Ascending aorta (tissue), 2 donors: ENCODE measurements at regions of chr1 and their contacts with region 1.

Region 1: DNA sequence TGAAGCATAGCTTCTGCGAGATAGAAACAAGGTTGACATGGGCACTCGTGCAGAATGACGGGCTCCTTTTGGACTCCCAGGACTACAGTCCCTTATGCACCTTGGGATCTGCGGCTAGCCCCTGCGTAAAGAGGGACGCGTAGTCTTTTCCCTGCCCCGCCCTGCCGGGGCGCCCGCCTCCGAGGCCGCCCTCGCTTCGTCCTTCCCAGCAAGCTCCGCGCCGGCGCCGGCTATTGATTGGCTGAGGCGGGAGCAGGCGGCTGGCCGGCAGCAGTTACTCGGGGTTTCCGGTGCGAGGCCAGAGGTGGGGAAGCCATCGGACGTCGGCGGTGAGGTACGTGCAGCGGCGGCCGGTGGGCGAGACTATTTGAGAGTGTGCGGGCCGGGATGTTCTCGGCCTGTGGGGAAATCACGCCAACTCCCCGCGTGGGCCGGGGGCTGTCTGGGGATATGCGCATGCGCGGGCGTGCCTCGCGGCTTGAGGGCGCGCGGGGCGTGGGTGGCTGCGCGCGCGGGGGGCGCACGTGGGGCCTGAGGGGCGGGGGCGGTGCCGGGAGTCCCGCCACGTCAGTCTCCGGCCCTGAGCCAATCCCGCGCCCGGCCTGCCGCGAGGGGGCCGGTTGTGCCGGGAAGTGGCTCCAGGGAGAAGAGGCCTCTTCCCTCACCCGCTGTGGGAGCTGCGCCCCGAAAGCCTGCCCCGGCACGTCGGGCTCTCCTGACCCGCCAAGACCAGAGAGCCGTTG is at the start of gene TXLNA:
- DNase-seq: peak; percentile 87 to 98
- H3K4me3 ChIP-seq: peak within 1 kb of the TSS; percentile 73 to 79
- H3K27ac ChIP-seq: peak within 1 kb of the TSS; percentile 94
- H3K4me1 ChIP-seq: peaks cover 19 to 29% of the 10 kb centered on the region in 2 donors
- H3K27me3 ChIP-seq: no peaks in the 10 kb centered on the region
- CTCF ChIP-seq: peak in 1 of 3 experiments; percentile 36
- total RNA-seq, gene TXLNA: 83.8 TPM

Region 2: DNA sequence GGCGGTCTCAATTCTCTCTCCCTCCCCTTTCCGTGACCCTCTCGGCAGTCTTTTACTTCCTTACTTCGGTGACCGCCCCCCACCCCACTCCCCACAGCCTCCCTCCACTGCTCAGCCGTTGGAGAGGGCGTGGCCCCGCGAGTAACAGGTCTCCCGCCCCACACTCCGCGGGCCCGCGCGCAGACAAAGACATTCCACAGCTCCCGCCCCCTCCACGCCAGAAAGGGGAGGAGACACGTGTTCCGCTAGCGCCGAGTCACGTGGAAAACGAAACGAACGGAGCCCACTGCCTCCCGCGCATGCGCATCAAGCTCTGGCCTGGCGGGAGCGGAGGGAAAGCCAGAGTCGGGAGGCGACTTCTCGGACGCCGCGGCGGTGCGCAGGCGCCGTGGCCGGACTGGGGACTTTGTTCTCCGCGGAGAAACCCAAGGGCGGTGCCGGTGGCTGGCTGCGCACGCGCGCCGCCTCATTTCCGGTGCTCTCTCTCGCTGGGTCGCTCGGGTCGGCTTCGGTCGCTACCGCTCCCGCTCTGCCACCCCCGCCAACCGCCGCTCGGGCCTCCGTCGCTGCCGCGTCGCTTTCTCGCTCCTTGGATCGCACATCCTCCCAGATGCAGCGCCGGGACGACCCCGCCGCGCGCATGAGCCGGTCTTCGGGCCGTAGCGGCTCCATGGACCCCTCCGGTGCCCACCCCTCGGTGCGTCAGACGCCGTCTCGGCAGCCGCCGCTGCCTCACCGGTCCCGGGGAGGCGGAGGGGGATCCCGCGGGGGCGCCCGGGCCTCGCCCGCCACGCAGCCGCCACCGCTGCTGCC is 166.0 kb before region 1 on chr1 and contains the start of gene KHDRBS1:
- intact Hi-C with region 1: loop called (anchors 10 kb)
- DNase-seq: peak; percentile 95 to 100
- H3K4me3 ChIP-seq: peak within 1 kb of the TSS; percentile 96 to 99
- H3K27ac ChIP-seq: peak within 1 kb of the TSS; percentile 98 to 100
- H3K4me1 ChIP-seq: peaks cover 9 to 23% of the 10 kb centered on the region in 2 donors
- H3K27me3 ChIP-seq: no peaks in the 10 kb centered on the region
- CTCF ChIP-seq: no peak
- total RNA-seq, gene KHDRBS1: 120 TPM

Region 3: DNA sequence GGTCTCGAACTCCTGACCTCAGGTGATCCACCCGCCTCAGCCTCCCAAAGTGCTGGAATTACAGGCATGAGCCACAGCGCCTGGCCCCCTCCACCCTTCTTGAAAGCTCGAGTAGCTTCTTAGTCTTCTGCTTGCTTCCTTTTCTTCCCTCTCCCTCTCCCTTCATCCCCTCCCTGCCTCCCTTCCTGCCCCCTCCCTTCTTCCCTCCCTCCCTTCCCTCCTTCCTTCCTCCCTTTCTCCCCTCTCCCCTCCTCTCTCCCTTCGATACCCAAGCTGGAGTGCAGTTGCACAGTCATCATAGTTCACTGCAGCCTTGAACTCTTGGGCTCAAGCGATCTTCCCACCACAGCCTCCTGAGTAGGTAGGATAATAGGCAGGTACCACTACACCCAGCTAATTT is 154.1 kb before region 1 on chr1:
- intact Hi-C with region 1: no loop called
- DNase-seq: no peak
- H3K4me3 ChIP-seq: no peak overlapping the region
- H3K27ac ChIP-seq: peak overlapping the region in 1 of 2 donors; percentile 25
- H3K4me1 ChIP-seq: peaks cover 3 to 21% of the 10 kb centered on the region in 2 donors
- H3K27me3 ChIP-seq: no peaks in the 10 kb centered on the region
- CTCF ChIP-seq: no peak

Region 4: DNA sequence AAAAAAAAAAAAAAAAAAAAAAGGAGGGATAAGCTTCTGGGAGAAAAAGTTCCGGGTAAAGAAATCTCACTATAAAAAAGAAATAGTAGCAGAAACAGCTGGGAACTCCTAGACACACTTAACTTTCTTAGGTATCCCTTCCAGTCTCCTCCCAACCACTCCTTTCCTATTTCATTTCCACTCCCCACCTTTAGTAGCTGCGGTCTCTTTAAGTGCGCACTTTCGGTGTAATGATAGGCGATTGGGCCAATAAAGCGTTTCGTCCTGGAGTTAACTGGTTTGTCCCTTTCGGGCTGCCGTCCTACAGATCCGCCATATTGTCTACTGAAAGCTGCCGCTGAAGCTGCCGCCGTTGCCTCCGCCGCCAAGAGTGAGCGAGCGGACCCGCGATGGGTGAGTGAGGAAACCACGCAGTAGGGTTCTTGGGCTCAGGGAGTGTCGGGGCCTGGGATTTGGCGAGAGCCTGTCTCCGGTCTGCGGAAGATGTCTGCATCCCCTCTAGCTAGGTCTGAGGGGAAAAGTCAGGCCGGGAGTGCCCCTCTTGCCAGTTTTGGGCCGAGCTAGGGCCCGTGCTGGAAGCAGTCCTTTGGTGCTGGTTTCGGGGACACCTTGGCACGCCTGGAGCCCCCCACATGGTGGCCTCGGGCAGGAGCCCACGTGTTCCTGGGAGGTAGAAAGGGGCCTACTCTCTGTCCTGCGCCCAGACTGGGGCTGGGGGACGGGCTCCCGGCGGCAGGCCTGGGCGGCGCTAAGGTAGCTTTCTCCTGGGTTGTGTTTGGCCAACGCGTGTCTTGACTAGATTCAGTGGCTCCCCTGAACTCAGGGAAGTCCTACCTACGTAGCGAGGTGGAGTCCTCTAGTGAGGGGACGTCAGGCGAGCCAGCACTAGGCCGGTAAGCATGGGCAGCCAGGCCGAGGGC is 71.6 kb before region 1 on chr1 and contains the start of gene KPNA6:
- intact Hi-C with region 1: loop called (anchors 1 kb)
- DNase-seq: peak; percentile 55 to 95
- H3K4me3 ChIP-seq: peak within 1 kb of the TSS; percentile 80 to 92
- H3K27ac ChIP-seq: peak within 1 kb of the TSS; percentile 87 to 92
- H3K4me1 ChIP-seq: peaks cover 4 to 38% of the 10 kb centered on the region in 2 donors
- H3K27me3 ChIP-seq: no peaks in the 10 kb centered on the region
- CTCF ChIP-seq: peak in 1 of 3 experiments; percentile 5
- total RNA-seq, gene KPNA6: 26.1 TPM

Region 5: GRCh38 chr1:32138943-32139342 is 40.7 kb before region 1 on chr1:
- intact Hi-C with region 1: no loop called
- DNase-seq: no peak
- H3K4me3 ChIP-seq: no peak overlapping the region
- H3K27ac ChIP-seq: no peak overlapping the region
- H3K4me1 ChIP-seq: peaks cover 0 to 6% of the 10 kb centered on the region in 2 donors
- H3K27me3 ChIP-seq: no peaks in the 10 kb centered on the region
- CTCF ChIP-seq: no peak

Region 6: DNA sequence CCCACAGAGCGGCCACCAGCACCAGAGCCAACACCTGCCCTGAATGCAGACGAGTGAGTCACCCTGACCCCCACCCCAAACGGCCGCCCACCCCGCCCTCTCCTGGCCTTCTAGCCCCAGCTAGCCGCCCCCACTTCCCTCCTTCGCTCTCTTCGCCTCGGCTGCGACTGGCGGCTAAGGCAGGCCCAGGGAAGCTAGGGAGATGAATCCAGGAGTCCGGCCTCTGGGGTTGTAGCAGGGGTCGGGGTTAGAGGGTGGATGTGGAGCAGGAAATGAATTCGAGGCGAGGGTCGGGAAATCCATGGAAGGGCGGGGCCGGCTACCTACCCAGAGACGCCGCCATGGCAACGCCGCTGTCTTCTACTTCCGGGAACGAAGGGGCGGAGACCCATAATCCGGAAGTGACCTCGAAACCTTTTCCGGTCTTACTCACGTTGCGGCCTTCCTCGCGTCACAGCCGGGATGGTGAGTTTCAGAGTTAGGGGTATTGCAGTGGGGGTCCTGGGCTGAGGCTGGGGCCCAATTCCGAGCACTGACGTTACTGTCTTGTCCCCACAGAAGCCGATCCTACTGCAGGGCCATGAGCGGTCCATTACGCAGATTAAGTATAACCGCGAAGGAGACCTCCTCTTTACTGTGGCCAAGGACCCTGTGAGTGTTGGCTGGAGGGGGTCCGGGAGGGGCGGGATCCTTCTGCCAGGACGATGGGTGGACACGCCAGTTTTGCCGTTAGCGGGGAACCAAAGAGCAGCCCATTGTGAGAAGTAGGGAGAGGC is 42.6 kb after region 1 on chr1 and contains the starts of genes EIF3I and TMEM234:
- intact Hi-C with region 1: loop called (anchors 1 kb)
- DNase-seq: peak; percentile 80 to 97
- H3K4me3 ChIP-seq: peak within 1 kb of the TSS; percentile 87 to 97
- H3K27ac ChIP-seq: peak within 1 kb of the TSS; percentile 81 to 97
- H3K4me1 ChIP-seq: peaks cover 19% of the 10 kb centered on the region in 2 donors
- H3K27me3 ChIP-seq: no peaks in the 10 kb centered on the region
- CTCF ChIP-seq: no peak
- total RNA-seq, gene EIF3I: 234 TPM
- total RNA-seq, gene TMEM234: 4.0 TPM

Region 7: DNA sequence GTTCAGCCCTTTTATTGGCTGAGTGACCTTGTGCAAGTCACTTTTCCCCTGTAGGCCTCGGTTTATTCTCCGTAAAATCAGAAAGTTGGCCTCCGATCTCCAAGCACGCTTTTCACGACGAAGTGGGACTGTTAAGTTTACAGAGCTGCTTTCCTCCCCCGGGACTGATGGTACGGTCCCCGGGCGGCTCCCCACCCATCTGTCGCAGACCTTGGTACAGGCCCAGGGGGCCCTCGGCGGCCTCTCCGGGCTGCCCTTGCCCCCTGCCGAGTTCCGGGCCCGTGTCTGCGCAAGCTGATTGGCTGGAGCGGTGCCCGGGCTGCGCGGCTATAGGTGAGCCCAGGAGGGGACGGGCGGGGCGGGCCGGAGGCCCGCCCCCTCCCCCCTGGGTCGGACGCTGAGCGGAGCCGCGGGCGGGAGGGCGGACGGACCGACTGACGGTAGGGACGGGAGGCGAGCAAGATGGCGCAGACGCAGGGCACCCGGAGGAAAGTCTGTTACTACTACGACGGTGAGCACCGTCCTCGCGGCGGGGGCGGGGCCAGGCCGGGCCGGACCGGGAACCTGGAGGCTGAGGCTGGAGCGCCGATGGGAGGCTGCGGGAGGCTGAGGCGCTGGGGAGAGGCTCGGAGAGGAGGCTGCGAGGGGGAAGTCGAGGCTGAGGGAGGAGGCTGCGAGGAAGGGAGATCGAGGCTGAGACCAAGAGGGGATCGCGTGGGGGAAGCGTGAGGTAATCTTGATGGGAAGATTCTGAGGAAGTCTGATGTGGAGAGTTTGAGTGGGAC is 112.3 kb after region 1 on chr1 and contains the start of gene HDAC1:
- intact Hi-C with region 1: loop called (anchors 2 kb)
- DNase-seq: peak; percentile 89 to 98
- H3K4me3 ChIP-seq: peak within 1 kb of the TSS; percentile 77 to 80
- H3K27ac ChIP-seq: peak within 1 kb of the TSS; percentile 77 to 82
- H3K4me1 ChIP-seq: peaks cover 0 to 4% of the 10 kb centered on the region in 2 donors
- H3K27me3 ChIP-seq: no peaks in the 10 kb centered on the region
- CTCF ChIP-seq: no peak
- total RNA-seq, gene HDAC1: 75.0 TPM

Region 8: DNA sequence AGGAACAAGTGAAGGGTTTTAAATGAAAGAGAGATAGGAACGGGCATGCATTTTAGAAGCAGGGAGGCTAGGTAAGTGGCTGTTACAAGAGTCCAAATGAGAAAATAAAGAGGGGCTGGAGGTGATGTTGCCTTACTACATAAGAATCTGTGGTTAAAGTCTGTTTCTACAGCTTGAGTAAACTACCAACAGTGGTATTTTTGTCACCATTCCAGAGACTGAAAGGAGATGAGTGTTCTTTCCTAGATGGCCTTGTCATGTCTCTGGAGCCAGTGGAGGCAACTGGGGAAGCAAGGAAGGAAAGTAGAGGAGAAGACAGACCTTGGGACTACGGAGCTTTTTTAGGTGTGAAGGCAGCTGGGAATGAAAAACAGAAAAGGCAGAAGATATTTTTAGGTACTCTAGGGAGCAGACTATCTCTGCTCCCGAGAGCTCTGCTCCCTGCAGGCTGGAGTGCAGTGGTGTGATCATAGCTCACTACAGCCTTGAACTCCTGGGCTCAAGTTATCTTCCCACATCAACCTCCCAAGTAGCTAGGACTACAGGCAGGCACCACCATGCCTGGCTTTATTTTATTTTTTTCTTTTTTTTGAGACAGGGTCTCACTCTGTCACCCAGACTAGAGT is 124.5 kb after region 1 on chr1:
- intact Hi-C with region 1: no loop called
- DNase-seq: no peak
- H3K4me3 ChIP-seq: no peak overlapping the region
- H3K27ac ChIP-seq: no peak overlapping the region
- H3K4me1 ChIP-seq: no peaks in the 10 kb centered on the region
- H3K27me3 ChIP-seq: no peaks in the 10 kb centered on the region
- CTCF ChIP-seq: no peak